ENCODE measurements at regions of chr10 and their contacts with region 1.

Region 1: DNA sequence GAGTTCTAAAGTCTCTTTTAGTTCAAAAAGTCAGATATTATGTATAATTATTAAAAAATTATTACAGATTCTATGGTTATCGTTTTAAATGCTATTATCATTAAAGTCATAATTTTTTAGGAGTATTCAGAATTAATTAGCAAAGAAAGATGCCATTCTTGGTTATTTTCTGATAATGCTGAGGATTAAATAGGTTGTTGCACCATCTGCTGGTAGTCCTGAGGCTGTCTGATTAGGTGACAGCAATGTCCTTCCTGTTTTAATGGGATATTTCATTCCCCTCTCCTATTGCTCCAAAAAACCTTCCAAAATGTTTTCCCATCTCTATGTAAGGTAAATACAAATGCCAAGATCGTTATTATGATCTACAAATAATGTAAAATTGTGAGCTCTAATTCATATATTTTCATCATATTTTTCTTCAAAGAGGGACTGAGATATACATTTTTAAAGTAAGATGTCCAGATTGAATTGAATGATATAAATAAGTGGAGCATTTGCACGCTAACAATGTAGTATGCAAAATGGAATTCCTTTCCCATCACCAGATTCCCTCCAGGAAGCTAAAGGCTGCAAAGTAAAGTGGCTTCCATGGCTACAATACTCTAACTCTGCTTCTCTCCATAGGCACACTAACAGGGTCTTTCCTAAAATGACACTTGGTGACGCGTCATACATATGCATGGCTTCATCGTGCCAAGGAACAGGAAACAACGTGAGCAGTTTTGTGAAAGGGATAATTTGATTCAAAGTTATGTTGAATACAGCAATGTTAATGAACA is 58.8 kb upstream of the AKR1E2 start:
- DNase-seq: no peak
- H3K4me3 Mint-ChIP-seq: no peak overlapping the region
- H3K27ac Mint-ChIP-seq: no peak overlapping the region
- H3K4me1 Mint-ChIP-seq: no peaks in the 10 kb centered on the region
- H3K27me3 Mint-ChIP-seq: peaks cover 5% of the 10 kb centered on the region

Region 2: GRCh38 chr10:3197348-3198003 is 1569.7 kb before region 1 on chr10:
- CTCF ChIA-PET with region 1: interaction called, 11 read pairs
- DNase-seq: peak; percentile 77
- H3K4me3 Mint-ChIP-seq: peak overlapping the region; percentile 20
- H3K27ac Mint-ChIP-seq: peak overlapping the region; percentile 75
- H3K4me1 Mint-ChIP-seq: peaks cover 9% of the 10 kb centered on the region
- H3K27me3 Mint-ChIP-seq: peaks cover 94% of the 10 kb centered on the region